ENCODE measurements at regions of chr11 and their contacts with region 1.

Region 1: DNA sequence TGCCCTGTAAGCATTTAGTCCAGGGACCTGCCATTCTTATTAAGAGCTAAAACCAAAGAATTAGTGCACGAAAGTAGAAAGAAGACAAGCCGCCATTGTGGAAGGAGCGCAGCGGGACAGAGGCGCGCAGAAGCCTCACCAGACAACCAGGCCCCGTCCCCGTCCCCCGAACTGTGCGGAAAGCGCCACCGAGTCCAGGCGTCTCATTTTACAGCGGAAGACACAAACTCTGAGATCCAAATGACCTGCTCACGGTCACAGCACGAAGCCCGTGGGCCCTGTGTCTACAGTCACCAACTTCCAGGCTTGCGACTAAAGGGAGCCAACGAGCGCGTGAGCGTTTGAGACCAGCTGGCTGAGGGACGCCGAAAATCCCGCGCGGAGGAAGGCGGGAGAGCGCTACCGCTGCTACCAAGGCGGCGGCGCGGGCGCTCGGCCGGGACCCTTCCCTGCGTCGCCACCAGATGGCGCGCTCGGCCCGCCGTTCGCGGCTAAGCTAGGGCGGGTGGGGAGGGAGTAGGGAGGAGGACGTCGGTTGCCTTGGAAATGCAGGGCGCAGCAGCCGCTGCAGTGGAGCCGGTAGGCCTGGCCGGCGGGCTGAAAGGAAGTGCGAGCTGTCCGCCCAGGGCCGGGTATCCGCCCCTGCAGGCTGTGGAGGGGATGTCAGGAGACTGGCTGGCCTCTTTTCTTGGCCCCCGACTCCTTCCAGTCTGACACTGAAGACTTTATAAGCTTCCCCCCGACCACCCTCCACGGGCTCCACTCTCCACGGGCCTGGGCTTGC is 434 bp upstream of the CCDC83 start:
- DNase-seq: peak; percentile 88
- H3K4me3 Mint-ChIP-seq: peak overlapping the region; percentile 84
- H3K27ac Mint-ChIP-seq: peak overlapping the region; percentile 83
- H3K4me1 Mint-ChIP-seq: peaks cover 18% of the 10 kb centered on the region
- H3K27me3 Mint-ChIP-seq: peaks cover 5% of the 10 kb centered on the region

Region 2: GRCh38 chr11:85664615-85665481 is 189.9 kb before region 1 on chr11 and contains the start of gene CREBZF:
- intact Hi-C with region 1: loop called (anchors 1 kb)
- DNase-seq: peak; percentile 94
- H3K4me3 Mint-ChIP-seq: peak within 1 kb of the TSS; percentile 99
- H3K27ac Mint-ChIP-seq: peak within 1 kb of the TSS; percentile 97
- H3K4me1 Mint-ChIP-seq: peaks cover 51% of the 10 kb centered on the region
- H3K27me3 Mint-ChIP-seq: no peaks in the 10 kb centered on the region
- total RNA-seq, gene CREBZF: 52.0 and 55.9 TPM in 2 replicates

Region 3: GRCh38 chr11:85810871-85811611 is 43.7 kb before region 1 on chr11 and contains the start of gene SYTL2:
- intact Hi-C with region 1: loop called (anchors 1 kb)
- DNase-seq: peak; percentile 83
- H3K4me3 Mint-ChIP-seq: peak within 1 kb of the TSS; percentile 94
- H3K27ac Mint-ChIP-seq: peak within 1 kb of the TSS; percentile 85
- H3K4me1 Mint-ChIP-seq: peaks cover 52% of the 10 kb centered on the region
- H3K27me3 Mint-ChIP-seq: no peaks in the 10 kb centered on the region
- total RNA-seq, gene SYTL2: 37.1 and 38.7 TPM in 2 replicates

Region 4: GRCh38 chr11:86041975-86042378 is 187.2 kb after region 1 on chr11:
- intact Hi-C with region 1: loop called (anchors 5 kb)
- DNase-seq: peak; percentile 48
- H3K4me3 Mint-ChIP-seq: peak overlapping the region; percentile 43
- H3K27ac Mint-ChIP-seq: peak overlapping the region; percentile 71
- H3K4me1 Mint-ChIP-seq: peaks cover 63% of the 10 kb centered on the region
- H3K27me3 Mint-ChIP-seq: no peaks in the 10 kb centered on the region

Region 5: DNA sequence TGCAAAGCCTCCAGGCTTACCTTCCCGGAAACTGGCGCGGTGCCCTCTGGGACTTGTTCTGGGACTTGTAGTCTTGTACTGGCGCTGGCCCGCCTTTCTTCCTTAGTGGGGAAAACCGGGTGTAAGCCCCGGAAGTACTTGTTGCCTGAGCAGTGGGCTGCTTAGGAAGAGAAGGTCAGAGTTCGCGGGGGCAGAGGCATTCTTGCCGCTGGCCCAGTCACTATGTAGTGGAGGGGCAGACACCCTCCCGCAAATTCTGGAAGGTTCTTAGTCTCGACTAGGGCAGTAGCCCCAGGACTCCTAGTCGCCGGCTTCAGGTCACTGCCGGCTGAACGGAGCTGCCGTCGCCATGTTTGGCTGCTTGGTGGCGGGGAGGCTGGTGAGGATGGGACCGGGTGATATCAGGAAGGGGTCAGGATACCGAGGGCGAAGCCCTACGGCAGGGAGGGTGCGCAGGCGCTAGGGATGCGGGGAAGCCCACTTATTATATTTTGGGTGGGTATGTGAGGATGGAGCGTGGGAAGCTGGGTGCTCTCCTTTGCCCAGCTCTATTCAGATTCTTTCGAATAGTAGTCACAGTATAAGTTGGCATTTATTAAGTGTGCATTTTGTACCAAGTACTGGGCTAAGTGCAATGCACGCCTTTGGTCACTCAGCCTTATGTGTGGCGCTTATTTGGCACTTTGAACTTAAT is 447.5 kb after region 1 on chr11 and contains the start of gene HIKESHI:
- intact Hi-C with region 1: loop called (anchors 2 kb)
- DNase-seq: peak; percentile 83
- H3K4me3 Mint-ChIP-seq: peak within 1 kb of the TSS; percentile 100
- H3K27ac Mint-ChIP-seq: peak within 1 kb of the TSS; percentile 97
- H3K4me1 Mint-ChIP-seq: peaks cover 28% of the 10 kb centered on the region
- H3K27me3 Mint-ChIP-seq: no peaks in the 10 kb centered on the region
- total RNA-seq, gene HIKESHI: 54.2 and 56.4 TPM in 2 replicates

Region 6: DNA sequence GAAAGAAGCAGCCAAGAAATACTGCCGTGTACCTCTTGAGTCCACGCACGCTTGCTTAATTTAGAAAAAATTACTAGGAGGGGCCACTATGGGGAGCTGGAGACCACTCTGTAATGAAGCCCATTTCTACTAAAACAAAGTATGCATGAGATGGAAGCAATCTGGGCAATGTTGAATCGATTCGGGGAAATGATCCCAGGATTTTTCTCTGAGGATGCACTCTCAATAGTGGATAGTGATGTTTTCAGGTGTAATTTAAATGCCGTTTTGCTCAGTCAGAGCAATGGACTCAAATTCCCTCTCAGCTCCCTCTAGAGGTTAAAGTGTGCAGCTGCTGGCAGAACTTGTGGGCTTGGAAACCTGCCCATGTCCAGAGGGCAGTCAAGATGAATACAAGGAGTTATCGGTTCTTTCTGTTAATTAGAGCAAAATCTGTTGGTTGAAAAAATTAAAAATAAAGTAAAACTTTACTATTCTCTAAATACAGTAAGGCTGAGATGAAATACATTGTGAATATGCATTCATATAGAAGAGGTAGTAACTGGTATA is 753.6 kb after region 1 on chr11:
- intact Hi-C with region 1: loop called (anchors 1 kb)
- DNase-seq: peak; percentile 22
- H3K4me3 Mint-ChIP-seq: no peak overlapping the region
- H3K27ac Mint-ChIP-seq: no peak overlapping the region
- H3K4me1 Mint-ChIP-seq: peaks cover 30% of the 10 kb centered on the region
- H3K27me3 Mint-ChIP-seq: peaks cover 3% of the 10 kb centered on the region

Measured in activated T-helper 1 cell treated with anti-CD3 and anti-CD28 coated beads, Interleukin-12 subunit alpha, Interleukin-12 subunit beta, Interleukin-2, Interleukin-4 antibody, amounts not matched to agents 30 ng/mL and 10 ng/mL and 1 ng/mL, durations not matched to agents 14 hours and 24 hours and 36 hours (primary cell).